ENCODE measurements at regions of chr1 and their contacts with region 1.

Region 1: GRCh38 chr1:40951943-40952743 is 27.4 kb upstream of the CTPS1 start:
- DNase-seq: peak; percentile 68
- ATAC-seq: peak; percentile 81
- H3K4me3 Mint-ChIP-seq: no peak overlapping the region
- H3K27ac Mint-ChIP-seq: no peak overlapping the region
- H3K4me1 Mint-ChIP-seq: peaks cover 20% of the 10 kb centered on the region
- H3K27me3 Mint-ChIP-seq: peaks cover 21% of the 10 kb centered on the region

Region 2: DNA sequence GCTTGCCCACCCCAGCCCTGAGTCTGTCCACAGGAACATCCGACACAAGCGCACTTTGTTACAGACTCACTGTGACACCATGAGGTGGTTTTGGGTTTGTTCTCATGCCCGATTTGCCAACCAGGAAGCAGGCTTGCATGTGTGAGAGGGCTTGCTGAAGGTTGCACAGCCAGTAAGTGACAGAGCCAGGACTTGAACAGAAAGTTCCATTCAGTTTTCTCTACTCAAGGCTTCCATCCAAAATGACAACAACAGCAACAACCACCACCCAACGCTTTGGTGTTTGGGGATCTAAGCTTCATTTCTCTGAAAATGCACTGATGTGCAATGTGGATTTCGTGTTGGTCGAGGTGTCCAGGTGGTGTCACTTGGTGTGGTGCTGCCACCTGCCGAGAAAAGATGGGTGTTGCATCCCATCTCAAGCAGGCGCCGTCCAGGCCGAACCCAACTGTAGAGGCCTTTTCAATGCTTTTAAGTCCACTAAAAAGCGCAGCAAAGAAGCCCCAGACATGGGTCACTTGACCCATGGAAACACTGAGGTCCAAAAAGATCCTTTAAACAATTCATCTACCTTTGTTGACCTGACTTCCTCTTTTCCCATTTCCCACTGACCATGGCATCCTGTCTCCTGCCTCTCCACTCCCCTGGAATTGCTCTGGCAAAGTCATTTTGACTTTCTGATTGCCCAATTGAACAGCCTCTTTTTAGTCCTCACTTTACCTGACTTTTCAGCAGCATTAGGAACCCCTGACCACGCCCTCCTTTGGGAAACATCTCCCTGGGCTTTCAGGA is 102.1 kb before region 1 on chr1:
- CTCF ChIA-PET with region 1: interaction called, 119 read pairs
- DNase-seq: peak; percentile 87
- ATAC-seq: peak; percentile 91
- H3K4me3 Mint-ChIP-seq: no peak overlapping the region
- H3K27ac Mint-ChIP-seq: peak overlapping the region; percentile 40
- H3K4me1 Mint-ChIP-seq: peaks cover 22% of the 10 kb centered on the region
- H3K27me3 Mint-ChIP-seq: no peaks in the 10 kb centered on the region

Region 3: DNA sequence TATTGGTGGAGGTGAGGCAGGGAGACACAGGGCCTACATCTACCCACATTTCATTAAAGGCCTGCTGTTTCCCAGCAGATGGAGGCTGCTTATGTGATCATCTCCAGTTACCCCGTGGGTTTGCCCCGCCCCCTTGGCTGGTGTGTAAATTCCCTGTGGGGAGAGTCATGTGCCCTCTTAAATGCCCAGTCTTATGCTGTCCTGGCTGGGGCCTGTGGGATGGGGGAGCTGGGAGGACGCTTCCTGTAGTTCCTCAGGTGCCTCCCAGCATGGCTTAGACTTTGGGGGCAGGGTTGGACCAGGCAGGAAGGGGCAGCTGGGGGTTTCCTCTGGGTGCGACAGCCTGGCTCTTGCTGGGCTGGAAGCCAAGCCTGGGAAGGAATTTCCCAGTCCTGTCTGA is 74.4 kb before region 1 on chr1:
- CTCF ChIA-PET with region 1: interaction called, 131 read pairs
- DNase-seq: no peak
- ATAC-seq: no peak
- H3K4me3 Mint-ChIP-seq: no peak overlapping the region
- H3K27ac Mint-ChIP-seq: peak overlapping the region; percentile 43
- H3K4me1 Mint-ChIP-seq: peaks cover 43% of the 10 kb centered on the region
- H3K27me3 Mint-ChIP-seq: peaks cover 6% of the 10 kb centered on the region

Region 4: GRCh38 chr1:40965529-40965928 is 13.4 kb after region 1 on chr1:
- CTCF ChIA-PET with region 1: interaction called, 88 read pairs
- DNase-seq: no peak
- ATAC-seq: no peak
- H3K4me3 Mint-ChIP-seq: no peak overlapping the region
- H3K27ac Mint-ChIP-seq: no peak overlapping the region
- H3K4me1 Mint-ChIP-seq: no peaks in the 10 kb centered on the region
- H3K27me3 Mint-ChIP-seq: peaks cover 4% of the 10 kb centered on the region

Region 5: GRCh38 chr1:40979233-40980067 is 27.3 kb after region 1 on chr1 and contains the start of gene CTPS1:
- CTCF ChIA-PET with region 1: interaction called, 14 read pairs
- DNase-seq: peak; percentile 96
- ATAC-seq: peak; percentile 92
- H3K4me3 Mint-ChIP-seq: peak within 1 kb of the TSS; percentile 87
- H3K27ac Mint-ChIP-seq: peak within 1 kb of the TSS; percentile 91
- H3K4me1 Mint-ChIP-seq: peaks cover 42% of the 10 kb centered on the region
- H3K27me3 Mint-ChIP-seq: no peaks in the 10 kb centered on the region
- total RNA-seq, gene CTPS1: 77.1 to 94.1 TPM

Region 6: DNA sequence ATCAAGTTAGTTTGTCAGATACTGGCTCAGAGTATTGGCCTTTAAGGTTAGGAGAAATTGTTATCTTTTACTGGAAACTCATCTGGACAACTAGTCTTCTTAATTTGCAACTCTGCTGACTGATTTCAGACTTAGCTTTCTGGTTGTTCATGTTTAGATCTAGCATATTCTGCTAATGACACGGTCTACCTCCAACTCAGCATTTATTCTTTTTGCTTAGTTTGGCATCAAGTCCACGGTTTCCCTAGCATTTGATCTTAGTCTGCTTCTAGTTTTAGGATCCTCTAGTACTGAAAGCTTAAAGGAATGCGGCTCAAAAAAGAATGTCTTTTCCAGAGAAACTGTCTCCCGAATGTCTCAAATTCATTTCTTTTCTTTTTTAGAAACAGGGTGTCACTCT is 145.0 kb after region 1 on chr1:
- CTCF ChIA-PET with region 1: no interaction called
- DNase-seq: no peak
- ATAC-seq: no peak
- H3K4me3 Mint-ChIP-seq: no peak overlapping the region
- H3K27ac Mint-ChIP-seq: no peak overlapping the region
- H3K4me1 Mint-ChIP-seq: peaks cover 2% of the 10 kb centered on the region
- H3K27me3 Mint-ChIP-seq: no peaks in the 10 kb centered on the region